MCF 10A (cell line): ENCODE measurements at regions of chr5 and their contacts with region 1.

Region 1: GRCh38 chr5:103475629-103476240 is 86.9 kb downstream of the NUDT12 start:
- DNase-seq: peak; percentile 59
- H3K4me3 Mint-ChIP-seq: no peak overlapping the region
- H3K27ac Mint-ChIP-seq: no peak overlapping the region
- H3K4me1 Mint-ChIP-seq: no peaks in the 10 kb centered on the region
- H3K27me3 Mint-ChIP-seq: peaks cover 13% of the 10 kb centered on the region
- CTCF ChIP-seq: peak; percentile 66

Region 2: GRCh38 chr5:102536323-102536928 is 939.3 kb before region 1 on chr5:
- CTCF ChIA-PET with region 1: no interaction called
- POLR2A ChIA-PET with region 1: no interaction called
- intact Hi-C with region 1: loop called (anchors 2 kb)
- DNase-seq: peak; percentile 17
- H3K4me3 Mint-ChIP-seq: no peak overlapping the region
- H3K27ac Mint-ChIP-seq: no peak overlapping the region
- H3K4me1 Mint-ChIP-seq: no peaks in the 10 kb centered on the region
- H3K27me3 Mint-ChIP-seq: peaks cover 11% of the 10 kb centered on the region
- CTCF ChIP-seq: peak; percentile 54

Region 3: DNA sequence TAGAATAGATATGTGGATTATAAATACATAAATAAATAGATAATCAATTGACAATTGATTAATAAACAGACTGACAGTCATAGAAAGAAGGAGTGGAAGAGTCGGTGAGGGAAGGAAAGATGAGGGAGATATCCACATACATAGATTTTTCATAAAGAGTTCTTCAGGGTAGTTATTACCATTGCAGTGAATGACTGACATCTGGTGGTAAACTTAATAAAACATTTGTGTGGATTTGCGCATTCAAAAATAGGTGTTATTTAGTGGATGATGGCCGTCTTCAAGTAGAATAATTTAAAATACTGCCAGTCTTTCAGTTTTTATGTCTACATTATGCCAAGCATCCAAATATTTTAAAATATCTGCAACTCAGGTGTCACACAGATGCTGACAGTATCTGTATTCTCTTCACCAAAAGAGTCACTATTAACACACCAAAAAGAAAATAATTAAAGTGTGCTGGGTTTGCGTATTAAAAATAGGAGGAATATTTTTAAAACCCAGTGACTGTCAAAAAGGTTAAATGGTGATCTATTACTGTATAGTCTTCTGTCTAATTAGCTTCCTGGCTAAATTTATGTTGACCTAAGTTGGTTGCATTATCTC is 434.6 kb before region 1 on chr5:
- CTCF ChIA-PET with region 1: no interaction called
- POLR2A ChIA-PET with region 1: no interaction called
- intact Hi-C with region 1: loop called (anchors 5 kb)
- DNase-seq: peak; percentile 59
- H3K4me3 Mint-ChIP-seq: no peak overlapping the region
- H3K27ac Mint-ChIP-seq: no peak overlapping the region
- H3K4me1 Mint-ChIP-seq: no peaks in the 10 kb centered on the region
- H3K27me3 Mint-ChIP-seq: no peaks in the 10 kb centered on the region
- CTCF ChIP-seq: peak; percentile 53

Region 4: DNA sequence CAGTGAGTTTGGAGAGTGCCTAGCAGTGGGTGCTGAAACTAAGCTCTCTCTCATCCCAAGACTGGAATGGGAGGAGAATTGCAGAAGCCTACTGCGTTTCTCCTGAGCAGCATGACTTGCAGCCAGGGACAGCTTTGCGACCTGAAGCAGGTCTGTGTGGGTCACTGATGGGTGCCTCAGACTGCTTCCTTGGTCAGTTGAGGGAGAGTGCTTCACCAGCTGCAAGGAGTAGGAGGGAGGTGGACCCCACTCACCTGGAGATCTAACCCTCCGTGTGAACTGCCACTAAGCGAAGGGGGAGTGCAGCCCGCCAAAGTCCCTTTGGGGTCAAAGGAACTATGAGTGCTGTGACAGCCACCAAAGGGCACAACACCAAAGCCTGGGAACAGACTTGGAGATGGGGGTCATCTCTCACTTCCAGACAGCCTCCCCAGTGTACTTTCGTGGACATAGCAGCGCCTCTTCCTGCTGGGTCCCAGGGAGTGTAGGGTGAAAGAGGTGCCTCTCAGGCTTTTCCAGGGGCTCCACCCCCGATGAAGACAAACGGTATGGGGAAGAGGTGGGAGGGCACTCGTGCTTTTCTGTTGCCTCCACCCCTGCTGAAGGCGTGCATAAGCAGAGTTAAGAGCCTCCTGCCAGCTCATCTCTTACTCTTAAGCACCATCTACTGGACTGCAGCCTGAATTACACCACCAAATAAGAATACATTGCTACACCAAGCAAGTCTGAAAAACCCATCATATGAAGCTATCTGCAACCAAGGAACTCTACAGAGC is 251.4 kb before region 1 on chr5:
- CTCF ChIA-PET with region 1: interaction called, 85 read pairs
- POLR2A ChIA-PET with region 1: no interaction called
- intact Hi-C with region 1: no loop called
- DNase-seq: peak; percentile 74
- H3K4me3 Mint-ChIP-seq: no peak overlapping the region
- H3K27ac Mint-ChIP-seq: no peak overlapping the region
- H3K4me1 Mint-ChIP-seq: no peaks in the 10 kb centered on the region
- H3K27me3 Mint-ChIP-seq: no peaks in the 10 kb centered on the region
- CTCF ChIP-seq: peak; percentile 65

Region 5: DNA sequence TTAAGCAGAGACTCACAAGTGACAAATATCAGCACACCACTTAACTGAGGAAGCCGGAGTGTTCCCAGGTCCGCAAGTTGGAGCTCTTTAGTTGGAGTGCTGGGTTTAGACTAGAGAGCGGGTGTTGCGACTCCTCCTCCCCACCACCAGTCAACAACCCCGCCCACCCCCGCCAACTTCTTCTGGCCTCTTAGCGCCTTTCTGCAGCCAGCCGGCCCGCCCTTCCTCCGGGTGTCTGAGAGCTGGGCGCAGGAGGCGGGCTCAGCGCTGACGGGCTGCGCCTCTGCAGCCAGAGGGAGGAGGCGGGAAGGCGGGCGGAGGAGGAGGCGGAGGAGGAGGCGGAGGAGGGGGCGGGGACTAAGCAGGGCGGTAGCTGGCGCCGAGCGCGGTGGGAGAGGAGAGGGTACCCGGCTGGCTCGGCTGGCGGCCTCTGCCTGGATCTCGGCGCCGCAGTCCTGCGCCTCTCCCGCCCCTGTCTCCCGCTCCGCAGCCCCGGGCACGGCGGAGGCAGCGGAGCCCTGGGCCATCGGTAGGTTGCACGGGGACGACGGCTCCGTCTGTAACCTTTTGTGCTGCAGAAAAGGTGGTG is 217.3 kb before region 1 on chr5 and contains the start of gene MACIR:
- CTCF ChIA-PET with region 1: interaction called, 46 read pairs
- POLR2A ChIA-PET with region 1: interaction called, 16 read pairs
- intact Hi-C with region 1: loop called (anchors 1 kb)
- DNase-seq: peak; percentile 98
- H3K4me3 Mint-ChIP-seq: peak within 1 kb of the TSS; percentile 88
- H3K27ac Mint-ChIP-seq: peak within 1 kb of the TSS; percentile 9
- H3K4me1 Mint-ChIP-seq: peaks cover 31% of the 10 kb centered on the region
- H3K27me3 Mint-ChIP-seq: no peaks in the 10 kb centered on the region
- CTCF ChIP-seq: no peak
- total RNA-seq, gene MACIR: 6.6 and 8.9 TPM in 2 replicates

Region 6: GRCh38 chr5:103487218-103487617 is 11.5 kb after region 1 on chr5:
- CTCF ChIA-PET with region 1: interaction called, 29 read pairs
- POLR2A ChIA-PET with region 1: no interaction called
- intact Hi-C with region 1: no loop called
- DNase-seq: no peak
- H3K4me3 Mint-ChIP-seq: no peak overlapping the region
- H3K27ac Mint-ChIP-seq: no peak overlapping the region
- H3K4me1 Mint-ChIP-seq: no peaks in the 10 kb centered on the region
- H3K27me3 Mint-ChIP-seq: peaks cover under 1% of the 10 kb centered on the region
- CTCF ChIP-seq: no peak